Naive thymus-derived CD4-positive, alpha-beta T cell (primary cell): ENCODE measurements at regions of chrX and their contacts with region 1.

Region 1: DNA sequence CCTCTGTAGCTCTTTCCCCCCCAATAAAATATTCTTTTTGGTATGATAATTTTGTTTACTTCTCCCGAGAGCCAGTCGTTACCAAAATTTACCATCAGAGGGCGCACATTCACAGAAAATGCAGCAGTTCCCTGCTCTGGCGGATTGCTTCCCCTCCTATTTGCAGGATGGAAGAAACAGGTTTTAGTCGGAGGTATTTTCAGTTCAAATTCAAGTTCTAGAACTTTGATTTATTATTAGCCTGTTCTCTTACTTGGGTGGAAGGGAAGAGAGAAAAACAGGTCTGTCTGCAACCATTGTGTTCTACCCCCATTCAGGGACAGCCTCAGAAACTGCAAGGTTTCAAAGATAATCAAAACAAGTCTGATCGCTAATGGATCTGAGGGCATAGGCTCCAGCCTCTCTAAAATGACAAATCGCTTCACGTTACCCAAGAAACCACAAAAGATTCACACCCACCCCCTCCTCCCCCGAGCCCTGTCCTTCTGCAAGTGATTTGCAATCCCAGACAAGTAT is 263.8 kb upstream of the RPS6KA3 start:
- DNase-seq: peak; percentile 10 to 61 (median 43)
- ATAC-seq: peak; percentile 47
- H3K4me3 ChIP-seq: no peak overlapping the region
- H3K4me3 Mint-ChIP-seq: peak overlapping the region in 4 of 10 donors; percentile 16 to 48 (median 32)
- H3K27ac ChIP-seq: no peak overlapping the region
- H3K27ac Mint-ChIP-seq: peak overlapping the region in 2 of 9 donors; percentile 6 to 39
- H3K4me1 ChIP-seq: no peaks in the 10 kb centered on the region
- H3K4me1 Mint-ChIP-seq: peaks cover 0 to 16% (median 4%) of the 10 kb centered on the region in 7 donors
- H3K27me3 ChIP-seq: no peaks in the 10 kb centered on the region
- H3K27me3 Mint-ChIP-seq: peaks cover 18 to 59% (median 22%) of the 10 kb centered on the region in 5 donors

Region 2: DNA sequence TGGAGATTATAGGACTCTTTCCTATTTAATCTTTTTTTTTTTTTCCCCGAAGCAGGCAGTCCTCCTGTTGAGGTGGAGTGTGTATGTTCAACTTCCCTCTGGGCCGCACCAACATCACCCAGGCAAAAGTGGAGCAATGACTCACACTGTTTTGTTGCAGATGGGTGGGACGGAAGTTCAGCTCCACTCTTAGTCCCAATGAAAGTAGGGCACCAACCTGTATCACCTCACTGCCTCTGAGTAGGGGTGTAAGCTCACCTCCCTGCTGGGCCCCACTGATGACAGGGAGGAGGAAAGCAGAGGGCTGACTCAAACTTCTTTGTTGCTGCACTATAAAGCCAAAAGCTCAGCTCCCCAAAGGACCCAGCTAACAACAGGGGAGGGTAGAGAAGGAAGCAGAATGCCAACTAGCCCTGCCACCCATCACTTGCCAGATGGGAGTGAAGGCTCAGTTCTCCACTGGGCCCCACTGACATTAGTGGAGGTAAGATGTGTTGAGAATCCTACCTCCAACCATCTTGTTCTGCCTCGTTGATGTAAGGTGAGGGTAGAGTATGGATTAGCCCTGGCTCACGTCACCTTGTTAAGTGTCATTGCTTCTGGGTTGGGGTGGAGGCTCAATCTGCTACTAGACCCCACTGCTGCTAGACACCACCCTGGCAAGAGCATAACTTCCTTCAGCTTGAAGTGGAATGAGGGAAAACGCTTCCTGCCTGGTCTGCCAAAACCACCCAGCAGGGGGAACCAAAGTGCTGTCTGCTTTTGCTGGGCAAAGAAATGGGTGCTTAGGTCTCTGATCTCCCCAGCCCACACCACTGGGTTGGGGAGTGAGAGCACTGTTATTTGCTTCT is 277.9 kb before region 1 on chrX:
- CTCF ChIA-PET with region 1: no interaction called
- POLR2A ChIA-PET with region 1: no interaction called
- intact Hi-C with region 1: loop called (anchors 1 to 2 kb)
- DNase-seq: peak; percentile 45 to 73 (median 66)
- ATAC-seq: peak; percentile 88
- H3K4me3 ChIP-seq: no peak overlapping the region
- H3K4me3 Mint-ChIP-seq: peak overlapping the region in 1 of 10 donors; percentile 51
- H3K27ac ChIP-seq: no peak overlapping the region
- H3K27ac Mint-ChIP-seq: peak overlapping the region in 5 of 9 donors; percentile 36 to 52 (median 48)
- H3K4me1 ChIP-seq: peaks cover 16 to 31% of the 10 kb centered on the region in 2 donors
- H3K4me1 Mint-ChIP-seq: peaks cover 5 to 64% (median 52%) of the 10 kb centered on the region in 7 donors
- H3K27me3 ChIP-seq: no peaks in the 10 kb centered on the region
- H3K27me3 Mint-ChIP-seq: no peaks in the 10 kb centered on the region

Region 3: GRCh38 chrX:20463296-20464075 is 67.0 kb before region 1 on chrX:
- CTCF ChIA-PET with region 1: no interaction called
- POLR2A ChIA-PET with region 1: no interaction called
- intact Hi-C with region 1: no loop called
- DNase-seq: no peak
- ATAC-seq: no peak
- H3K4me3 ChIP-seq: no peak overlapping the region
- H3K4me3 Mint-ChIP-seq: peak overlapping the region in 1 of 10 donors; percentile 35
- H3K27ac ChIP-seq: no peak overlapping the region
- H3K27ac Mint-ChIP-seq: no peak overlapping the region
- H3K4me1 ChIP-seq: no peaks in the 10 kb centered on the region
- H3K4me1 Mint-ChIP-seq: peaks cover 0 to 24% (median 5%) of the 10 kb centered on the region in 7 donors
- H3K27me3 ChIP-seq: no peaks in the 10 kb centered on the region
- H3K27me3 Mint-ChIP-seq: peaks cover 0 to 2% (median 0%) of the 10 kb centered on the region in 5 donors

Region 4: DNA sequence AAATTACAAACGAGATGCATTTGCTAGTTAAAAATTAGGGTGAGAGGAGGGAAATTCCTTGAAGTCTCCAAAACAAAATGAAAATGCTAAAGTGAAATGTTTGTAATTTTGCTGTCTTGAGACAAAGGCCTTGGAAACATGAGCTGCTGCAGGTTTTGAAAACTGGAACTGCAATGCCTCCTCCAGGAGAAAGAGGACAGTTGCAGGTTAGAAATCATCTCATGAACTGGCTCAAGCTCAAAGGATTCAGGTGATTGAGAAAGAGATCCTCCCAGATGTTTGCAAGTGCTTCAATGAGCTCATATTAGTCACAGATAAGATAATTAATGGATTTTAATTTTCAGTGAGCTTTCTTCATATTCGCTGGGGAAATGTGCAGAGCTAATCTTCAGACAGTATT is 1195.0 kb after region 1 on chrX:
- CTCF ChIA-PET with region 1: interaction called, 22 read pairs
- POLR2A ChIA-PET with region 1: no interaction called
- intact Hi-C with region 1: loop called (anchors 1 kb)
- DNase-seq: peak in 6 of 9 donors; percentile 4 to 43 (median 14)
- ATAC-seq: no peak
- H3K4me3 ChIP-seq: no peak overlapping the region
- H3K4me3 Mint-ChIP-seq: no peak overlapping the region
- H3K27ac ChIP-seq: no peak overlapping the region
- H3K27ac Mint-ChIP-seq: no peak overlapping the region
- H3K4me1 ChIP-seq: no peaks in the 10 kb centered on the region
- H3K4me1 Mint-ChIP-seq: no peaks in the 10 kb centered on the region
- H3K27me3 ChIP-seq: no peaks in the 10 kb centered on the region
- H3K27me3 Mint-ChIP-seq: peaks cover 0 to 16% (median 0%) of the 10 kb centered on the region in 5 donors

Region 5: DNA sequence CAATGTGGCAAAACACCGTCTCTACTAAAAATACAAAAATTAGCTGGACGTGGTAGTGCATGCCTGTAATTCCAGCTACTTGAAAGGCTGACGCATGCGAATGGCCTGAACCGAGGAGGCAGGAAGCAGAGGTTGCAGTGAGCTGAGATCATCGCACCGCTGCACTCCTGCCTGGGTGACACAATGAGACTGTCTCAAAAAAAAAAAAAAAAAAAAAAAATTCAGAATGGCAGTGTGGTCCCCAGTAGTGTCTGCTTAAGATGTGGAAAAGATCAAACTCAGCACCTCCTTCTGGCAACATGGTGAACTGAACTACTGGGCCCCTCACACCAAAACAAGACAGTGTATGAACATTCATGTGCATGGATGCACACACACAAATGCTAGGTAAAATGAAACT is 1442.3 kb after region 1 on chrX:
- CTCF ChIA-PET with region 1: no interaction called
- POLR2A ChIA-PET with region 1: no interaction called
- intact Hi-C with region 1: loop called in 1 of 2 experiments (anchors 5 kb)
- DNase-seq: peak in 7 of 9 donors; percentile 11 to 48 (median 31)
- ATAC-seq: peak; percentile 83
- H3K4me3 ChIP-seq: no peak overlapping the region
- H3K4me3 Mint-ChIP-seq: peak overlapping the region in 9 of 10 donors; percentile 30 to 82 (median 61)
- H3K27ac ChIP-seq: no peak overlapping the region
- H3K27ac Mint-ChIP-seq: peak overlapping the region; percentile 82 to 98 (median 94)
- H3K4me1 ChIP-seq: peaks cover 10% of the 10 kb centered on the region in 2 donors
- H3K4me1 Mint-ChIP-seq: peaks cover 0 to 37% (median 26%) of the 10 kb centered on the region in 7 donors
- H3K27me3 ChIP-seq: no peaks in the 10 kb centered on the region
- H3K27me3 Mint-ChIP-seq: no peaks in the 10 kb centered on the region

Region 6: GRCh38 chrX:22192417-22193060 is 1662.1 kb after region 1 on chrX:
- CTCF ChIA-PET with region 1: no interaction called
- POLR2A ChIA-PET with region 1: no interaction called
- intact Hi-C with region 1: loop called in 1 of 2 experiments (anchors 5 kb)
- DNase-seq: peak in 8 of 9 donors; percentile 4 to 49 (median 34)
- ATAC-seq: peak; percentile 70
- H3K4me3 ChIP-seq: no peak overlapping the region
- H3K4me3 Mint-ChIP-seq: no peak overlapping the region
- H3K27ac ChIP-seq: no peak overlapping the region
- H3K27ac Mint-ChIP-seq: no peak overlapping the region
- H3K4me1 ChIP-seq: no peaks in the 10 kb centered on the region
- H3K4me1 Mint-ChIP-seq: peaks cover 0 to 5% (median 2%) of the 10 kb centered on the region in 7 donors
- H3K27me3 ChIP-seq: no peaks in the 10 kb centered on the region
- H3K27me3 Mint-ChIP-seq: peaks cover 0 to 5% (median 0%) of the 10 kb centered on the region in 5 donors